Testis (tissue), 5 donors: ENCODE measurements at regions of chr6 and their contacts with region 1.

Region 1: GRCh38 chr6:150813319-150813992 is 52.0 kb upstream of the MTHFD1L start:
- DNase-seq: no peak
- H3K4me3 ChIP-seq: no peak overlapping the region
- H3K27ac ChIP-seq: peak overlapping the region in 1 of 2 donors; percentile 1
- H3K4me1 ChIP-seq: peaks cover 9% of the 10 kb centered on the region
- H3K27me3 ChIP-seq: no peaks in the 10 kb centered on the region
- CTCF ChIP-seq: no peak
- POLR2A ChIP-seq: no peak

Region 2: DNA sequence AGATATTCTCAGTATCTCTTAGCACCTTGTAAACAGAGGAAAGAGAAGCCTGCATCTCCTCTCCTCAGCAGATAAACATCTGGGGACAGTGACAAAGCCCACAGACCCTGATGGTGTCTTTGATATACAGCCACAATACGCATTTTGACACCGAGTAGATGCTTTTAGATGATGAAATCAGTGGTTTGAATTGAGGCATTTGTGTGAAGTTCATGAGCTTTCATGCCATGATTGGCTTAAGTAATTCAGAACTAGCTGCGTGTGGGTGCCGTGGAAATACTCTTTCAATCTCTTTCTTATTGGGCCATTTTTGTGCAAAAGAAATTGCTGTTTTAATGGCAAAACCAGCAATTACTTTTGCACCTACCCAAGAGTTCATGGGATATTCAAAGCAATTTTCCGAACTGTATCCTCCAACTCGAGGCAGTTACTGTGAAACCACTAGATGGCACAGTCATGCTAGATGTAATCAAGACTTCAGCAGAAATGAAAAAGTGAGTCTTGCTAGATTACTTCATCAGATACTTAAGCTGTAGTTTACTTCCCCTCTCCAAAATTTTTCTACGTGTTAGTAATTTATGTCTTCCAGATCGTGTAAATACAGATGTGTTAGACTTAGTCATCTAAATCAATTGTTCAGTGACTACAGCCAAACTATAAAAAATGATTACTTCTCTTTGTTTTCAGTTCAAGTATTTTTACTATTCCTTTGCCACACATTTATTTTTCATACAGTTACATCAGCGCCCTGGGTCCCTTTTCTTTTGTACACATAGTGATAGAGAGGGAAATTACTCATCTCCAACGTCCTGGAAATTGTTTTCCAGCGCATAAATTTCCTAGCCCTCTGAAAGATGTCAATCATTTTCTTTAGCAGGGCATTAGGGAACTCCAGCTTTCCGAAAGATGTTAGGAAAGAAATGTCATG is 395.3 kb before region 1 on chr6:
- intact Hi-C with region 1: loop called (anchors 5 kb)
- DNase-seq: peak; percentile 58
- H3K4me3 ChIP-seq: peak overlapping the region; percentile 33 to 45
- H3K27ac ChIP-seq: peak overlapping the region in 1 of 2 donors; percentile 62
- H3K4me1 ChIP-seq: no peaks in the 10 kb centered on the region
- H3K27me3 ChIP-seq: no peaks in the 10 kb centered on the region
- CTCF ChIP-seq: peak; percentile 64 to 88 (median 68)
- POLR2A ChIP-seq: no peak

Region 3: GRCh38 chr6:150865406-150866146 is 52.1 kb after region 1 on chr6 and contains the start of gene MTHFD1L:
- intact Hi-C with region 1: no loop called
- DNase-seq: peak; percentile 81
- H3K4me3 ChIP-seq: peak within 1 kb of the TSS; percentile 76 to 86
- H3K27ac ChIP-seq: peak within 1 kb of the TSS; percentile 91 to 92
- H3K4me1 ChIP-seq: peaks cover 21% of the 10 kb centered on the region
- H3K27me3 ChIP-seq: no peaks in the 10 kb centered on the region
- CTCF ChIP-seq: peak; percentile 45 to 51 (median 50)
- POLR2A ChIP-seq: no peak
- total RNA-seq, gene MTHFD1L: 29.5 to 35.3 TPM